Endothelial cell of umbilical vein (primary cell): ENCODE measurements at regions of chr17 and their contacts with region 1.

Region 1: GRCh38 chr17:40443583-40444327 is 505 bp downstream of the IGFBP4 start:
- DNase-seq: peak; percentile 69
- H3K4me3 ChIP-seq: peak overlapping the region; percentile 51 to 92 (median 58)
- H3K27ac ChIP-seq: peak overlapping the region; percentile 43
- H3K4me1 ChIP-seq: peaks cover 40% of the 10 kb centered on the region
- H3K27me3 ChIP-seq: no peaks in the 10 kb centered on the region
- CTCF ChIP-seq: peak; percentile 45 to 76
- POLR2A ChIP-seq: no peak

Region 2: DNA sequence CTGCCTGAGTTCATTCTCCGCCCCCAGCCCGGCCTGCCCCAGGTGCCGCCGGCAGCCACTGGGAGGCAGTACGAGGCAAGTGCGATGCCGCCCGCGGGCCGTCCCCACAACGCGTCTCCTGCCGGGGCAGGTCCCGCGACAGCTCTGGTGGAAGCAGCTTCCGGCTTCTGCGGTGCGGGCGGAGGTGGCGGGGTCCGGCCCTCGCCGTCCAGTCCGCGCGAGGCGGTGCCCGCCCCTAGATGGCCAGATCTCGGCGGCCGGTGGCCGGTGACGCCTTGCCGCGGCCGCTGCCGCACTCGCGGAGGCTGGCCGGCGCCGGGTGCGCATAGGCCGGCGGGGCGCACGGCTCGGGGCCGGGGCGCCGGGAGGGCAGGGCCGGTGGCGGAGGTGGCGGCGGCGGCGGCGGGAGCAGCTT is 81.1 kb before region 1 on chr17:
- CTCF ChIA-PET with region 1: interaction called, 6 read pairs
- POLR2A ChIA-PET with region 1: no interaction called
- dilution Hi-C with region 1: no loop called
- intact Hi-C with region 1: loop called (anchors 1 kb)
- DNase-seq: peak; percentile 71
- H3K4me3 ChIP-seq: peak overlapping the region in 1 of 3 experiments; percentile 41
- H3K27ac ChIP-seq: no peak overlapping the region
- H3K4me1 ChIP-seq: peaks cover 7% of the 10 kb centered on the region
- H3K27me3 ChIP-seq: no peaks in the 10 kb centered on the region
- CTCF ChIP-seq: peak; percentile 85 to 88
- POLR2A ChIP-seq: no peak

Region 3: GRCh38 chr17:40457964-40458791 is 14.4 kb after region 1 on chr17:
- CTCF ChIA-PET with region 1: interaction called, 12 read pairs
- POLR2A ChIA-PET with region 1: no interaction called
- dilution Hi-C with region 1: no loop called
- intact Hi-C with region 1: no loop called
- DNase-seq: no peak
- H3K4me3 ChIP-seq: no peak overlapping the region
- H3K27ac ChIP-seq: no peak overlapping the region
- H3K4me1 ChIP-seq: no peaks in the 10 kb centered on the region
- H3K27me3 ChIP-seq: no peaks in the 10 kb centered on the region
- CTCF ChIP-seq: no peak
- POLR2A ChIP-seq: no peak

Region 4: GRCh38 chr17:40518401-40519121 is 74.8 kb after region 1 on chr17:
- CTCF ChIA-PET with region 1: no interaction called
- POLR2A ChIA-PET with region 1: no interaction called
- dilution Hi-C with region 1: no loop called
- intact Hi-C with region 1: no loop called
- DNase-seq: no peak
- H3K4me3 ChIP-seq: no peak overlapping the region
- H3K27ac ChIP-seq: no peak overlapping the region
- H3K4me1 ChIP-seq: peaks cover 7% of the 10 kb centered on the region
- H3K27me3 ChIP-seq: peaks cover 4 to 19% of the 10 kb centered on the region in 2 experiments
- CTCF ChIP-seq: no peak
- POLR2A ChIP-seq: no peak